Heart left ventricle (tissue), 16 donors: ENCODE measurements at regions of chr15 and their contacts with region 1.

Region 1: GRCh38 chr15:49155110-49155833 is at the start of gene COPS2:
- DNase-seq: peak; percentile 91 to 95 (median 94)
- ATAC-seq: peak; percentile 98 to 99 (median 99)
- H3K4me3 ChIP-seq: peak within 1 kb of the TSS; percentile 72 to 96 (median 89)
- H3K27ac ChIP-seq: peak within 1 kb of the TSS; percentile 11 to 93 (median 80)
- H3K4me1 ChIP-seq: peaks cover 0 to 52% (median 33%) of the 10 kb centered on the region in 12 donors
- H3K27me3 ChIP-seq: no peaks in the 10 kb centered on the region
- CTCF ChIP-seq: peak in 2 of 12 donors; percentile 12 to 17
- POLR2A ChIP-seq: peak in 1 of 2 donors; percentile 62
- total RNA-seq, gene COPS2: 41.6 to 94.4 (median 82.8) TPM

Region 2: DNA sequence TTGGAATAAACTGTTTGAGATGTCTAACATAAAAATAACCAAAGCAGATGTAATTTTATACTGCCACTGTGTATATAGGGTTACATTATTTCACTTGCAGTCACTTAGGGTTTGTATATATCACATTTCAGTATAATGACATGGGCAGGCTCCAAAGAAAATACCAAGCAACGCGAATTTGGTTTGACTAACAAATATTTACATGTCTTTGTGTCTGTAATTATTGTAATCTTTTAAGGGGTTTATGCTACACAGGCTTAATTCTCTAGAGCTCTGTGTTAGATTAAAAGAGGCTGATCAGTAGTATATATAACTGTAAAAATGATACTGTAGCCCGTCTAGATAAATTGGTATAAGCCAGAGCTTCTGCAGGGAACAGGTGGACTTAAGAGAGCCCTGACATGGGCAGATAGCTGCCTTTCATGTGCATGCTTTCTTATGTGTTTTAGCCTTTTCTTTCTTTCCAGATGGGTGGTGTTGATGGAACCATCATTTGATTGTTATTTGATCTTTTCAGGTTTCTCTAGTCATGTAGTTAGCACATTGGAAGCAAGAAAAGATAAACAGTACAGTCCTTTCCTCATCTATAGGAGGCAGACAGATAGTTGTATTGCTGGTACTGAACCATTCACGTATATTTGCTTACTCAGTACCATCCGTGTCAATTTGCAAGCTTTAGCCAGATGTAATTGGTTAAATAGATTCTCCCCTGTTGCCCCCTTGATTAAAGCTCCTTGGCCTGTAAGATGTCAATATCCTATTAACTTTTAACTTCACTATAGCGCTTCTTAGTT is 100.9 kb after region 1 on chr15:
- intact Hi-C with region 1: no loop called
- DNase-seq: no peak
- ATAC-seq: no peak
- H3K4me3 ChIP-seq: no peak overlapping the region
- H3K27ac ChIP-seq: no peak overlapping the region
- H3K4me1 ChIP-seq: no peaks in the 10 kb centered on the region
- H3K27me3 ChIP-seq: no peaks in the 10 kb centered on the region
- CTCF ChIP-seq: no peak
- POLR2A ChIP-seq: no peak

Region 3: DNA sequence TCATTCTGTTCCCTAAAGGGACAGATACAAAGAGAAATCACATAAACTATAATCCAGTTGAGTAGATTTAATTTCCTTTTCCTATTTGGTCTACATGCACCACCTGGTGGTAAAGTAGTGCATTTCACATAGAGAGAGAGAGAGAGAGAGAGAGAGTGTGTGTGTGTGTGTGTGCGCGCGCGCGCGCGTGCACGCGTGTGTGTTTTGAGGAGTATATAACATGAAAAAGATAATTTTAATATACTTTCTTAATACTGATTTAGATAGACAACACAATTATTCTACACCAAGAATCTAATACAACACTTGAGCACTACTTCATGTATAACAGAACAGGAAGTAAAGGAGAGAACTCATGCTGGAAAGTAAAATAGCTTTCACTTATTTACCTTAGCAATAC is 266.7 kb after region 1 on chr15:
- intact Hi-C with region 1: loop called in 1 of 10 experiments (anchors 5 kb)
- DNase-seq: peak in 3 of 5 donors; percentile 20 to 55 (median 25)
- ATAC-seq: peak in 3 of 4 donors; percentile 52 to 64 (median 62)
- H3K4me3 ChIP-seq: peak overlapping the region in 9 of 12 donors; percentile 19 to 62 (median 32)
- H3K27ac ChIP-seq: peak overlapping the region in 6 of 12 donors; percentile 63 to 77 (median 69)
- H3K4me1 ChIP-seq: peaks cover 0 to 9% (median 0%) of the 10 kb centered on the region in 12 donors
- H3K27me3 ChIP-seq: no peaks in the 10 kb centered on the region
- CTCF ChIP-seq: peak; percentile 50 to 84 (median 67)
- POLR2A ChIP-seq: no peak